CD4-positive, alpha-beta memory T cell (primary cell): ENCODE measurements at regions of chr1 and their contacts with region 1.

Region 1: DNA sequence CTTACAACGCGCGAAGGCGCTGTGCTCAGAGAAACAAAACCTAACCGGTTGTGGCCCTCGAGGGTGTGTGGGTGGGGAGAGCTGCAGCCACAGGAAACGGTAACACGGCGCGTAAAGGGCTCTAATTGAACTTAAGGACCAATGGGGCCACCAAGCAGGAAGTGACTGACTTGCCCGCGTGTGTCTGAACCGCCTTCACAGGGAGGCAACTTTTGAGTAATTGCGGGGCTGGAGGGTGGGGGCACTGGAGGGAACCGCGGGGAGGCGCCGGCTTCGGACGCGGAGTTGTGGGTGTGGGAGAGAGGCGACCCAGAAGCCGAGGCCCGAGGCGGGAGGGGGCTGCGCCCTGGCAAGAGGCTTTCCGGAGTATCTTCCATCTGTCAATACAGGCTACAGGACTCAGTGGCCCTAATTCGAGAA is 577 bp upstream of the PNRC2 start:
- DNase-seq: peak; percentile 90 to 97 (median 94)
- H3K4me3 ChIP-seq: peak overlapping the region; percentile 66 to 99
- H3K4me3 Mint-ChIP-seq: peak overlapping the region; percentile 99 to 100 (median 100)
- H3K27ac ChIP-seq: peak overlapping the region; percentile 95
- H3K27ac Mint-ChIP-seq: peak overlapping the region; percentile 98 to 100 (median 100)
- H3K4me1 ChIP-seq: peaks cover 41% of the 10 kb centered on the region
- H3K4me1 Mint-ChIP-seq: peaks cover 26 to 70% (median 49%) of the 10 kb centered on the region in 4 donors
- H3K27me3 ChIP-seq: no peaks in the 10 kb centered on the region
- H3K27me3 Mint-ChIP-seq: no peaks in the 10 kb centered on the region

Region 2: GRCh38 chr1:23699280-23700179 is 259.5 kb before region 1 on chr1:
- CTCF ChIA-PET with region 1: no interaction called
- POLR2A ChIA-PET with region 1: no interaction called
- intact Hi-C with region 1: no loop called
- DNase-seq: no peak
- H3K4me3 ChIP-seq: no peak overlapping the region
- H3K4me3 Mint-ChIP-seq: no peak overlapping the region
- H3K27ac ChIP-seq: no peak overlapping the region
- H3K27ac Mint-ChIP-seq: peak overlapping the region in 1 of 7 donors; percentile 57
- H3K4me1 ChIP-seq: peaks cover 24% of the 10 kb centered on the region
- H3K4me1 Mint-ChIP-seq: peaks cover 27 to 44% (median 35%) of the 10 kb centered on the region in 4 donors
- H3K27me3 ChIP-seq: no peaks in the 10 kb centered on the region
- H3K27me3 Mint-ChIP-seq: no peaks in the 10 kb centered on the region

Region 3: GRCh38 chr1:23800400-23801337 is 158.4 kb before region 1 on chr1 and contains the start of gene GALE:
- CTCF ChIA-PET with region 1: no interaction called
- POLR2A ChIA-PET with region 1: interaction called, 4 read pairs
- intact Hi-C with region 1: loop called (anchors 10 kb)
- DNase-seq: peak; percentile 94 to 97 (median 94)
- H3K4me3 ChIP-seq: peak within 1 kb of the TSS; percentile 70 to 88
- H3K4me3 Mint-ChIP-seq: peak within 1 kb of the TSS; percentile 80 to 98 (median 92)
- H3K27ac ChIP-seq: peak within 1 kb of the TSS; percentile 92
- H3K27ac Mint-ChIP-seq: peak within 1 kb of the TSS; percentile 84 to 97 (median 94)
- H3K4me1 ChIP-seq: peaks cover 23% of the 10 kb centered on the region
- H3K4me1 Mint-ChIP-seq: peaks cover 8 to 37% (median 21%) of the 10 kb centered on the region in 4 donors
- H3K27me3 ChIP-seq: no peaks in the 10 kb centered on the region
- H3K27me3 Mint-ChIP-seq: no peaks in the 10 kb centered on the region
- total RNA-seq, gene GALE: 11.2 to 12.0 TPM

Region 4: DNA sequence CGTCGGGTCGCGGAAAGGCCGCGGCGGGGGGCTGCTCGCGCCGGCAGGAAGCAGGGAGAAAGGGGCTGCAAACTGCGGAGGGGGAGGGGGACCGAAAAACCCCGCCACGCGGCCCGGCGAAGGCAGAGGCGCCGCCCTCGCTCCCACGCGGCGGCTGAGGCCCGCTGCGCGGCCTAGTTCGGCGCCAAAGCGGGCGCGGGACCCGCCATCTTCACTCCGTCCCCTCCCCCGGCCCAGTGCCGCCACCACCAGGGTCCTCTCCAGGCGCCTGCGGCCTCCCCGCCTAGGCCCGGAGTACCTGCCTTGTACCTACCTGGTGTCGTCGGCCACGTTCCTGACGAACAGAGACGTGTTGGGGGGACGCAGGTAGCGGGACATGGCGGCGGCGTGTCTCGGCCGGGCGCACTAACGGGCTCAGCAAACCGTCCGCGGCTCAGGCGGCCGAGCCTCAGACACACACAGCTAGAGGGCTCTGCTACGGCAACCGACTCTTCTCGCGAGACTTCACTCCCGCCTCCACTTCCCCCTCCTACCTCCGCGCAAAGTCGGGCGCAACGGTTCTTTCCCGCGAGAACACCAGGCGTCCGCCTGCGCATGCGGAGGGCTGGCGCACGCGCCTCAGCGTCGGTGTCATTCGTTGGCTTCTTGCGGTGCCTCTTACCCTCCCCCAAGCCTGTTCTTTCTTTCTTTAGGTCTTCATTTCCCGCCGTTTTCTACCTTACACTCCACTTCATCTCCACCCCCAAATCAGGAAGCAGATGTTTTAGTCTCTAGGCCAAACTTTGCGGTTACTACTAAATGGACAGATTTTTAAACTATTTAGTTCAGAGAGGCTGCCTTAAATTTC is 21.1 kb after region 1 on chr1 and contains the start of gene SRSF10:
- CTCF ChIA-PET with region 1: interaction called, 5 read pairs
- POLR2A ChIA-PET with region 1: interaction called, 80 read pairs
- intact Hi-C with region 1: loop called (anchors 1 kb)
- DNase-seq: peak; percentile 97 to 99 (median 98)
- H3K4me3 ChIP-seq: peak within 1 kb of the TSS; percentile 80 to 85
- H3K4me3 Mint-ChIP-seq: peak within 1 kb of the TSS; percentile 88 to 98 (median 94)
- H3K27ac ChIP-seq: peak within 1 kb of the TSS; percentile 93
- H3K27ac Mint-ChIP-seq: peak within 1 kb of the TSS; percentile 92 to 99 (median 97)
- H3K4me1 ChIP-seq: peaks cover 50% of the 10 kb centered on the region
- H3K4me1 Mint-ChIP-seq: peaks cover 38 to 55% (median 47%) of the 10 kb centered on the region in 4 donors
- H3K27me3 ChIP-seq: no peaks in the 10 kb centered on the region
- H3K27me3 Mint-ChIP-seq: no peaks in the 10 kb centered on the region
- total RNA-seq, gene SRSF10: 163 to 169 TPM

Region 5: DNA sequence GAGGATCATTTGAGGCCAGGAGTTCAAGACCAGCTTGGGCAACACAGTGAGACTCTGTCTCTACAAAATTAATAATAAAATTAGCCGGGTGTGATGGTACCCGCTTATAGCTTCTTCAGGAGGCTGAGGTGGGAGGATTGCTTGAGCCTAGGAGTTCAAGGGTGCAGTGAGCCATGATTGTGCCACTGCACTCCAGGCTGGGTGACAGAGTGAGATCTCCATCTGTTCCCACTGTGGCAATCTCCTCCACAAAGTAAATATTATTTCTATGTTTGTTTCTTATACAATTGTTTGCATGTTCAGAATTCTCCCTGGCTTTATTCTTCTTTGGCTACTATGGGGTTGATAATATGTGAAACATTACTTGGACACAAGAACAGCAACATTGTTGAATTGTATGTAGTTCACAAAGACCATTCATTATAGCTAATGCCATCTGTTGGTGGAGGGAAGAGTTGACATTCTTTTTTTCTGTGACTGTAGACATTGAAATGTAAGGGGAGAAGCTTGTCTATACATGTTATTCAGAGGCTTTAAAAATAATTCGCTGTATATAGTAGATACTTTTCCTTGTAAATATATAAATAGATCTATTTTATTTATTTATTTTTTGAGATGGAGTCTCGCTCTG is 68.9 kb after region 1 on chr1:
- CTCF ChIA-PET with region 1: interaction called, 5 read pairs
- POLR2A ChIA-PET with region 1: interaction called, 3 read pairs
- intact Hi-C with region 1: loop called (anchors 1 kb)
- DNase-seq: peak in 4 of 5 donors; percentile 21 to 30 (median 25)
- H3K4me3 ChIP-seq: no peak overlapping the region
- H3K4me3 Mint-ChIP-seq: no peak overlapping the region
- H3K27ac ChIP-seq: no peak overlapping the region
- H3K27ac Mint-ChIP-seq: no peak overlapping the region
- H3K4me1 ChIP-seq: no peaks in the 10 kb centered on the region
- H3K4me1 Mint-ChIP-seq: peaks cover 0 to 2% (median 1%) of the 10 kb centered on the region in 4 donors
- H3K27me3 ChIP-seq: no peaks in the 10 kb centered on the region
- H3K27me3 Mint-ChIP-seq: peaks cover 0 to 1% of the 10 kb centered on the region in 2 donors

Region 6: GRCh38 chr1:24744911-24745710 is 786.1 kb after region 1 on chr1 and contains the start of gene CLIC4:
- CTCF ChIA-PET with region 1: no interaction called
- POLR2A ChIA-PET with region 1: no interaction called
- intact Hi-C with region 1: loop called (anchors 1 kb)
- DNase-seq: peak; percentile 98 to 99 (median 99)
- H3K4me3 ChIP-seq: peak within 1 kb of the TSS in 1 of 2 donors; percentile 58
- H3K4me3 Mint-ChIP-seq: peak within 1 kb of the TSS; percentile 83 to 93 (median 87)
- H3K27ac ChIP-seq: peak within 1 kb of the TSS; percentile 55
- H3K27ac Mint-ChIP-seq: peak within 1 kb of the TSS; percentile 58 to 90 (median 86)
- H3K4me1 ChIP-seq: peaks cover 26% of the 10 kb centered on the region
- H3K4me1 Mint-ChIP-seq: peaks cover 2 to 21% (median 11%) of the 10 kb centered on the region in 4 donors
- H3K27me3 ChIP-seq: no peaks in the 10 kb centered on the region
- H3K27me3 Mint-ChIP-seq: peaks cover 6 to 9% of the 10 kb centered on the region in 2 donors
- total RNA-seq, gene CLIC4: 3.0 to 3.8 TPM